ENCODE measurements at regions of chr1 and their contacts with region 1.

Region 1: GRCh38 chr1:109984456-109985275 is at the start of gene AHCYL1:
- DNase-seq: peak; percentile 96 to 97
- H3K4me3 ChIP-seq: peak within 1 kb of the TSS; percentile 66
- H3K4me3 Mint-ChIP-seq: peak within 1 kb of the TSS; percentile 88
- H3K27ac Mint-ChIP-seq: peak within 1 kb of the TSS; percentile 96
- H3K4me1 ChIP-seq: peaks cover 17% of the 10 kb centered on the region
- H3K4me1 Mint-ChIP-seq: peaks cover 11% of the 10 kb centered on the region
- H3K27me3 ChIP-seq: no peaks in the 10 kb centered on the region
- H3K27me3 Mint-ChIP-seq: no peaks in the 10 kb centered on the region
- CTCF ChIP-seq: peak; percentile 74 to 85
- total RNA-seq, gene AHCYL1: 62.6 and 64.2 TPM in 2 replicates

Region 2: DNA sequence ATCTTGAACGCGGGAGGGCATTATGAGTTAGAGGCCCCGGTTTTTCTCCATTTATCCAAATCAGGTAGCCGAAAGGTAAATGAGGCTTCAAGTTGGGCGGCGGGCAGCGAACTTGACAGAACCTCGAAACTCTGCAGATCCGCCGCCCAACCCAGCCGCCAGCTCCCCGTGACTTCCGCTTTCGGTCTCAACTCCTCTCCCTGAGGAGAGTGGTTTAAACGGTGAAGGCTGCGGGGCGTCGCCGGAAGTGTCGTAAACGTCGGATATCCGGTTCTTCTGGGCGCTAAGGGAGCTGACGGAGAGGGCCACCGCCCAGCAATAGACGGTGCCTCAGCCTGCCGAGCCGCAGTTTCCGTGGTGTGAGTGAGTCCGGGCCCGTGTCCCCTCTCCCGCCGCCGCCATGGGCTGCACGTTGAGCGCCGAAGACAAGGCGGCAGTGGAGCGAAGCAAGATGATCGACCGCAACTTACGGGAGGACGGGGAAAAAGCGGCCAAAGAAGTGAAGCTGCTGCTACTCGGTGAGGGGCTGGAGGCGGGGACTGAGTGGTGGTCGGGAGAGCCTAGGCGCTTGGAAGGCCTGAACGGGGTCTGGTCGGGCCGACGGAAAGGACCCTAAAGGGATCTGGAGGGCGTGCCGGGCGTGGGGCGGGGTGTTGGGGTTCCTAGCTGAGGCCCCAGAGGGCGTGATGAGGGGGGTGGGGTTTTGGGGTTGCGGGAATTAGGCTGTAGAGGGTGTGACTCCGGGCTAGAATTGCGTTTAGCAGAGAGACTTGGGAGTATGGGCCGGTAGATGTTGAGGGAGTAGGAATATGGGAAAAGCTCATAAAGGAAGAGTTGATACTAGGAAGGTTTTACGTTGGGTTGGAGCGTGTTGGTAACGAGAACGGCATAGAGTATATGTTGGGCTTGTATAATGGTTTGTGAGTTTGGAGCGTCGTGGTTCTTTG is 436.1 kb before region 1 on chr1 and contains the start of gene GNAI3:
- CTCF ChIA-PET with region 1: interaction called, 8 read pairs
- POLR2A ChIA-PET with region 1: no interaction called
- intact Hi-C with region 1: loop called (anchors 1 kb)
- DNase-seq: peak; percentile 89 to 92
- H3K4me3 ChIP-seq: peak within 1 kb of the TSS; percentile 94
- H3K4me3 Mint-ChIP-seq: peak within 1 kb of the TSS; percentile 97
- H3K27ac Mint-ChIP-seq: peak within 1 kb of the TSS; percentile 99
- H3K4me1 ChIP-seq: peaks cover 12% of the 10 kb centered on the region
- H3K4me1 Mint-ChIP-seq: peaks cover 9% of the 10 kb centered on the region
- H3K27me3 ChIP-seq: no peaks in the 10 kb centered on the region
- H3K27me3 Mint-ChIP-seq: peaks cover 3% of the 10 kb centered on the region
- CTCF ChIP-seq: no peak
- total RNA-seq, gene GNAI3: 6.2 and 6.4 TPM in 2 replicates

Region 3: DNA sequence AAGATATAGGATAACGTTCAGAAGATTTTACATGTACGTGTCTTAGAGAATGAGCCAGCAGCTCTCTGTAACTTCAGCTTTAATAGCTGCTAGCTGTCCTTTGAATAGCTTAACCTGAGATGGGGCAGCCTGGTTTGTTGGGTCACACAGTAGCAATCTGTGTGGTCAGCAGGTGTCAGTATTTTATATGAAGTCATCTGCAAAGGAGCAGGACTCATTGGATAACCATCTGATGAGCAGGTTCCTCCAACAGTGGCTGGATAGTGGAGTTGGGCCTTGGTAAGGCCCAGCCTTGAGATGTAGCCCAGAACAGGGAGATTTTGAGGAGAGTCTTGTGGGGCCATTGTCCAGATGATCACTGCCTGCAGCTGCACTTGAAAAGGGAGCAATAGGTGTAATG is 266.2 kb before region 1 on chr1:
- CTCF ChIA-PET with region 1: interaction called, 10 read pairs
- POLR2A ChIA-PET with region 1: no interaction called
- intact Hi-C with region 1: no loop called
- DNase-seq: peak; percentile 40 to 52
- H3K4me3 ChIP-seq: no peak overlapping the region
- H3K4me3 Mint-ChIP-seq: no peak overlapping the region
- H3K27ac Mint-ChIP-seq: no peak overlapping the region
- H3K4me1 ChIP-seq: peaks cover 9% of the 10 kb centered on the region
- H3K4me1 Mint-ChIP-seq: peaks cover 7% of the 10 kb centered on the region
- H3K27me3 ChIP-seq: no peaks in the 10 kb centered on the region
- H3K27me3 Mint-ChIP-seq: no peaks in the 10 kb centered on the region
- CTCF ChIP-seq: peak in 1 of 2 experiments; percentile 36

Region 4: GRCh38 chr1:109917768-109918606 is 66.7 kb before region 1 on chr1:
- CTCF ChIA-PET with region 1: interaction called, 20 read pairs
- POLR2A ChIA-PET with region 1: interaction called, 4 read pairs
- intact Hi-C with region 1: loop called (anchors 1 kb)
- DNase-seq: peak in 1 of 2 experiments; percentile 24
- H3K4me3 ChIP-seq: no peak overlapping the region
- H3K4me3 Mint-ChIP-seq: no peak overlapping the region
- H3K27ac Mint-ChIP-seq: peak overlapping the region; percentile 5
- H3K4me1 ChIP-seq: peaks cover 6% of the 10 kb centered on the region; the same call in 1 of the 2 replicates
- H3K4me1 Mint-ChIP-seq: peaks cover 14% of the 10 kb centered on the region
- H3K27me3 ChIP-seq: no peaks in the 10 kb centered on the region
- H3K27me3 Mint-ChIP-seq: no peaks in the 10 kb centered on the region
- CTCF ChIP-seq: peak in 1 of 2 experiments; percentile 11

Region 5: DNA sequence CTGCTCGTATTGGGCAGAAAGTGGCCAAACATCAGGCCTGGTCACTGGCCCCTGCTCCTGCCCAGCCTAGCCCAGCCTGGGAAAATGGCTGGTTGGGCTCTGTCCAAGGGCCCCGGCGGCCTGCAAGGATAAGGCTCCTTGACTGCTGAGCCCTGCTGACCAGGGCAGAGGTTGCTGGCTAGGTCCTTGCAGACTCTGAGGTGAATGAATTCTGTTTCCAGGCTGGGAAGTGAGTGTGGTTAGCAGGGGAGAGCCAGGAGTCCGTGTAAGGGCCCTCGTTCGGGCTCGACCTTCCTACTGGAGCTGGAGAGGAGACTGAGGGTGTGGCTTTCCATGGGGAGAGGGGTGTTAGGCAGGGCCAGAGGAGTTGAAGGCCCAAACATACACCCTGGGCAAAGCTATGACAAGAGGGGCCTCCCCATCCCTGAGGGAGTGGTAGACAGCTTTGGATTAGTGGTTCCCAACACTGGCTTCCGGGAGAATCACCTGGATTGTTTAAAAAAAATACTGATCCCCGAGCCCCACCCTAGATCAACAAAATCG is 53.4 kb before region 1 on chr1:
- CTCF ChIA-PET with region 1: interaction called, 11 read pairs
- POLR2A ChIA-PET with region 1: interaction called, 6 read pairs
- intact Hi-C with region 1: loop called (anchors 2 kb)
- DNase-seq: peak; percentile 83 to 90
- H3K4me3 ChIP-seq: no peak overlapping the region
- H3K4me3 Mint-ChIP-seq: peak overlapping the region; percentile 14
- H3K27ac Mint-ChIP-seq: peak overlapping the region; percentile 83
- H3K4me1 ChIP-seq: peaks cover 57% of the 10 kb centered on the region
- H3K4me1 Mint-ChIP-seq: peaks cover 23% of the 10 kb centered on the region
- H3K27me3 ChIP-seq: no peaks in the 10 kb centered on the region
- H3K27me3 Mint-ChIP-seq: no peaks in the 10 kb centered on the region
- CTCF ChIP-seq: no peak

Region 6: GRCh38 chr1:109959974-109960744 is 24.5 kb before region 1 on chr1:
- CTCF ChIA-PET with region 1: interaction called, 49 read pairs
- POLR2A ChIA-PET with region 1: interaction called, 17 read pairs
- intact Hi-C with region 1: loop called (anchors 1 kb)
- DNase-seq: peak; percentile 84 to 89
- H3K4me3 ChIP-seq: no peak overlapping the region
- H3K4me3 Mint-ChIP-seq: peak overlapping the region; percentile 62
- H3K27ac Mint-ChIP-seq: peak overlapping the region; percentile 80
- H3K4me1 ChIP-seq: peaks cover 59% of the 10 kb centered on the region
- H3K4me1 Mint-ChIP-seq: peaks cover 44% of the 10 kb centered on the region
- H3K27me3 ChIP-seq: no peaks in the 10 kb centered on the region
- H3K27me3 Mint-ChIP-seq: no peaks in the 10 kb centered on the region
- CTCF ChIP-seq: peak; percentile 11 to 26